ENCODE measurements at regions of chr19 and their contacts with region 1.

Region 1: GRCh38 chr19:35716801-35717666 is 769 bp upstream of the KMT2B start:
- DNase-seq: peak; percentile 92 to 99 (median 96)
- ATAC-seq: peak; percentile 82
- H3K4me3 ChIP-seq: peak overlapping the region; percentile 77 to 84
- H3K4me3 Mint-ChIP-seq: peak overlapping the region; percentile 96
- H3K27ac ChIP-seq: peak overlapping the region; percentile 44 to 83
- H3K27ac Mint-ChIP-seq: peak overlapping the region; percentile 97
- H3K4me1 ChIP-seq: peaks cover 59% of the 10 kb centered on the region
- H3K4me1 Mint-ChIP-seq: peaks cover 62% of the 10 kb centered on the region
- H3K27me3 ChIP-seq: no peaks in the 10 kb centered on the region
- H3K27me3 Mint-ChIP-seq: no peaks in the 10 kb centered on the region
- CTCF ChIP-seq: peak; percentile 99

Region 2: DNA sequence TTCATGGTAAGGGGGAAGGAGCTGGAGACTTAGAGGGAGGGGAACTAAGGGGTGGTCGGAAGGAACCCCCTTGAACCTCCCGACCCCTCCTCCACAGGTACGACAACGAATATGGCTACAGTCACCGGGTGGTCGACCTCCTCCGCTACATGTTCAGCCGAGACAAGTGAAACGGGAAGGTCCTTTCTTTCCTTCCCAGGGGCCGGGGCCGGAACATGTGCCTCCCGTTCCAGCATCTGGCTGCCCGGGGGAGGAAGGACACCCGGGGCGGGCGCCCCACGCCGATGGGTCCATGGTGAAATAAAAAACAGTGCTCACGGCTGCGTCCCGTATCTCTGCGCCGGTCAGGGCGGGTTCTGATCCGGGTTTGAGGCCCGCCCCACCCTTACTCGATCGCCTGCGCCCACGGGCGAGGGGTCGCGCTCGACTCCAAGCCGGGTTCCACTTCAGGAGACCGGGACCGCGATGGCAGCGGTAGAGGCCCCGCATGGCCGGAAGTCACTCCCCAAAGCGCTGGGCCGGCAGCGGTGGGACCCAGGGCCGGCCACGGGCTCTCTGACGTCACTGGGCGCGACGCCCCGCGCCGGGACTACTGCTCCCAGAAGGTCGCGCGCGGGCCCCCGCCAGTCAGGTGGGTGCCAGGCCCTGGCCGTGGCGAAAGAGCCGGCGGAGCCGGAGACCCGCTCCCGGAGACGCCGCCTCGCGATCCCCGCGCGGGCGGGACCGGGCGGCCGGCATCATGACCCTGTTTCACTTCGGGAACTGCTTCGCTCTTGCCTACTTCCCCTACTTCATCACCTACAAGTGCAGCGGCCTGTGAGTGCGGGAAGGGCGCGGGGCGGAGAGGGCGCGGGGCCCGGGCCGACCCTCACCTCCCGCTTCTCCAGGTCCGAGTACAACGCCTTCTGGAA is 171.8 kb before region 1 on chr19 and contains the start of gene TMEM147:
- CTCF ChIA-PET with region 1: interaction called, 3 read pairs
- POLR2A ChIA-PET with region 1: no interaction called
- intact Hi-C with region 1: loop called (anchors 1 kb)
- DNase-seq: peak; percentile 44 to 88 (median 79)
- ATAC-seq: peak; percentile 75
- H3K4me3 ChIP-seq: peak within 1 kb of the TSS; percentile 75 to 81
- H3K4me3 Mint-ChIP-seq: peak within 1 kb of the TSS; percentile 88
- H3K27ac ChIP-seq: peak within 1 kb of the TSS; percentile 79 to 85
- H3K27ac Mint-ChIP-seq: peak within 1 kb of the TSS; percentile 90
- H3K4me1 ChIP-seq: peaks cover 21% of the 10 kb centered on the region
- H3K4me1 Mint-ChIP-seq: peaks cover 35% of the 10 kb centered on the region
- H3K27me3 ChIP-seq: no peaks in the 10 kb centered on the region
- H3K27me3 Mint-ChIP-seq: no peaks in the 10 kb centered on the region
- CTCF ChIP-seq: no peak
- total RNA-seq, gene TMEM147: 22.3 to 27.2 TPM

Region 3: DNA sequence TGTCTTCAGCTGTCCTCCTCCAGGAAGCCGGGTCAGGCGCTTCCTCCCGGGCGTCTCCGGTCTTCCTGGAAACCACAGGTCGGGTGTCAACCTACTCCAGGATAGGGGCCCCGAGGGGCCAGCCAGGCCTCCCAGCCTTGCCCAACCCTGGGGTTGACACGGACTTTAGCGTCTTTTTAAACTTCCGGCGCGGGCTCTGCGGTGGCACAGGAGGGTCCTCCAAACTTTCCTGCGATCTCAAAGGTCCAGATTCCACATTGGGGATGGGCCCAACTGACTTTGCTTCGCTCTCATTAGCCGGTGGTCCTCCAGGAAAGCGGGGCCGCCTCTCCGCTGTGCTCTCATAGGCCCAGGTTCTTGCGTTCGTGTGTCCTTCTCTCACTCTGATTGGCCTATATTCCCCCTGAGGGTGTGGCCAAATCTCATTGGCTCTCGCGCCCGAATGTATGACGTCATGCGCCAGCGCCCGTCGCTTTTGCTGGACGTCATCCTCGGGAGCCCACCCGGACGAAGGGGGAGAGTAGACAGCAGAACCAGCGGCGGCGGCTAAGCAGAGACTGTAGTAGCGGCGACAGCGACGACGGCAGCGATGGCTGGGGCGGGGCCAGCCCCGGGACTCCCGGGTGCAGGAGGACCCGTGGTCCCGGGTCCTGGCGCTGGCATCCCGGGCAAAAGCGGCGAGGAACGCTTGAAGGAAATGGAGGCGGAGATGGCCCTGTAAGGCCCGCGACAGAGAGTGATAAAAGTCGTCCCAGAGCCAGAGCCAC is 88.3 kb before region 1 on chr19 and contains the start of gene RBM42:
- CTCF ChIA-PET with region 1: no interaction called
- POLR2A ChIA-PET with region 1: no interaction called
- intact Hi-C with region 1: loop called (anchors 1 kb)
- DNase-seq: peak; percentile 94 to 99 (median 98)
- ATAC-seq: peak; percentile 99
- H3K4me3 ChIP-seq: peak within 1 kb of the TSS; percentile 90 to 93
- H3K4me3 Mint-ChIP-seq: peak within 1 kb of the TSS; percentile 96
- H3K27ac ChIP-seq: peak within 1 kb of the TSS; percentile 90 to 91
- H3K27ac Mint-ChIP-seq: peak within 1 kb of the TSS; percentile 96
- H3K4me1 ChIP-seq: peaks cover 17% of the 10 kb centered on the region
- H3K4me1 Mint-ChIP-seq: peaks cover 24% of the 10 kb centered on the region
- H3K27me3 ChIP-seq: no peaks in the 10 kb centered on the region
- H3K27me3 Mint-ChIP-seq: no peaks in the 10 kb centered on the region
- CTCF ChIP-seq: no peak
- total RNA-seq, gene RBM42: 49.9 to 51.3 TPM

Region 4: DNA sequence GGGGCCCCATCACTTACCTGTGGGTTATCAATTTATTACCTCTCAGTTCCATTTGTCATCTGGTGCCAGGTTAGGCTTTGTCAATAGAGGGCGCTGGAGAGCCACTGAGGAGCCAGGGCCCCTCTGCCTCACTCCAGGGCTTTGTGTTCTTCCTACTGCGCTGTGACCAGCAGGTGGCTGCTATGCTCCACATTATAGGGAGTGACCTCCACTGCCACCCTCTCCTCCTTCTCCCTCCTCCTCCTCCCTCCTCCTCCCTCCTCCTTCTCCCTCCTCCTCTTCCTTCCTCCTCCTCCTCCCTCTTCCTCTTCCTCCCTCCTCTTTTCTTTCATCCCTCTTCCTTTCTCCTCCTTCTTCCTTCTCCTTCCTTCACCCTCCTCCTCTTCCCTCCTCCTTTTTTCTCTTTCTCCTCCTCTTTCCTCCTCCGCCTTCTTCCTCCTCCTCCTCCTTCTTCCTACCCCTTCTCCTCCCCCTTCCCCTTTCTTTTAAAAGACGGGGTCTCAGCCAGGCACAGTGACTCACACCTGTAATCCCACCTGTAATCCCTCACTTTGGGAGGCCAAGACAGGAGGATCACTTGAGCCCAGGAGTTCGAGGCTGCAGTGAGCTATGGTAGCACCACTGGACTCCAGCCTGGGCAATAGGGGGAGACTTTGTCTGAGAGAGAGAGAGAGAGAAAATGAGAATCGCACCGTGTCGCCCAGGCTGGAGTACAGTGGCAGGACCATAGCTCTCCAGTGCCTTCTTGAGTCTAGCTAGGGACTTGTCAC is 23.0 kb before region 1 on chr19:
- CTCF ChIA-PET with region 1: interaction called, 45 read pairs
- POLR2A ChIA-PET with region 1: no interaction called
- intact Hi-C with region 1: loop called (anchors 1 kb)
- DNase-seq: peak; percentile 80 to 94 (median 91)
- ATAC-seq: peak; percentile 100
- H3K4me3 ChIP-seq: no peak overlapping the region
- H3K4me3 Mint-ChIP-seq: no peak overlapping the region
- H3K27ac ChIP-seq: no peak overlapping the region
- H3K27ac Mint-ChIP-seq: no peak overlapping the region
- H3K4me1 ChIP-seq: no peaks in the 10 kb centered on the region
- H3K4me1 Mint-ChIP-seq: no peaks in the 10 kb centered on the region
- H3K27me3 ChIP-seq: no peaks in the 10 kb centered on the region
- H3K27me3 Mint-ChIP-seq: no peaks in the 10 kb centered on the region
- CTCF ChIP-seq: peak; percentile 99

Region 5: DNA sequence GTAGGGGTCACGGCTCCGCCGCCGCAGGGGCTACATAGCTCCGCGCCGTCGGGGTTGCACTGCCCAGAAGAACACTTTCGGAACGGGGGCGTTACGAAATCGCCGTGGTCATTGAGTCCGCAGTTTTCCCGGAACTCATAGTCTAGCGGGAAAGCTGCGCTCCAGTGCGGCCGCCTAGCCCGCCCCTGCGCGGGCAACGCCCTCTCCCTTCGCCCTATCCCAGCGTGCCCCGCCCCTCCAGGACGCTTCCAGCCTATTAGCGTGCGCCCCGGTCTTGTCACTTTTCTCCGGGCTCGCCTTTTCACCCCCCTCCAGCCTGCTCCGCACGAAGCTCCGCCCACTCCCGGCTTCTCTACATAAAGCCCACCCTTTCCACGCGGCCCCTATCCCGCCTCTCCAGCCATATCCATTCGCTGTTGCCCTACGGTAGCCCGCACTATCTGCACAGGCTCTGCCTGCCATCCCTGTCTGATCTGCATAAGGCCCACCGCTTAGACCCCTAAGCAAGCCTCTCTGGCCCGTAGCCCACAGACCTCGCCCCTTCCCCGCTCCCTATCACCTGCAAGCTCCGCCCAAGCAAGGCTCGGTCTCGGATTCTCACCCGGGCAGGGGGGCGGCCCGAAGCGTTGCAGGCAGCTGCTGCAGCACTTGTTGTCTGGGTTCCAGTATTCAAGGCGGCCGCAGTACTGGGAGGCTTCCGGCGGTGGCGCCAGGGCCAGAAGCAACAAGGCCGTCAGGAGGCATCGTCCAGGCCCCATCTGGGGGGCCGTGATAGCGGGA is 23.6 kb after region 1 on chr19:
- CTCF ChIA-PET with region 1: interaction called, 4 read pairs
- POLR2A ChIA-PET with region 1: interaction called, 17 read pairs
- intact Hi-C with region 1: loop called (anchors 1 kb)
- DNase-seq: peak; percentile 87 to 97 (median 95)
- ATAC-seq: peak; percentile 65
- H3K4me3 ChIP-seq: peak overlapping the region; percentile 60 to 63
- H3K4me3 Mint-ChIP-seq: peak overlapping the region; percentile 87
- H3K27ac ChIP-seq: peak overlapping the region; percentile 50 to 58
- H3K27ac Mint-ChIP-seq: peak overlapping the region; percentile 83
- H3K4me1 ChIP-seq: peaks cover 51% of the 10 kb centered on the region
- H3K4me1 Mint-ChIP-seq: peaks cover 53% of the 10 kb centered on the region
- H3K27me3 ChIP-seq: no peaks in the 10 kb centered on the region
- H3K27me3 Mint-ChIP-seq: no peaks in the 10 kb centered on the region
- CTCF ChIP-seq: no peak

Region 6: GRCh38 chr19:35757749-35758608 is 40.9 kb after region 1 on chr19 and contains the start of gene PROSER3:
- CTCF ChIA-PET with region 1: no interaction called
- POLR2A ChIA-PET with region 1: no interaction called
- intact Hi-C with region 1: loop called (anchors 1 kb)
- DNase-seq: peak; percentile 96 to 99 (median 98)
- ATAC-seq: peak; percentile 95
- H3K4me3 ChIP-seq: peak within 1 kb of the TSS; percentile 98 to 100
- H3K4me3 Mint-ChIP-seq: peak within 1 kb of the TSS; percentile 96
- H3K27ac ChIP-seq: peak within 1 kb of the TSS; percentile 95 to 97
- H3K27ac Mint-ChIP-seq: peak within 1 kb of the TSS; percentile 97
- H3K4me1 ChIP-seq: peaks cover 25% of the 10 kb centered on the region
- H3K4me1 Mint-ChIP-seq: peaks cover 34% of the 10 kb centered on the region
- H3K27me3 ChIP-seq: no peaks in the 10 kb centered on the region
- H3K27me3 Mint-ChIP-seq: peaks cover 9% of the 10 kb centered on the region
- CTCF ChIP-seq: no peak
- total RNA-seq, gene PROSER3: 17.3 to 19.5 TPM

Region 7: GRCh38 chr19:35899547-35900214 is 182.6 kb after region 1 on chr19:
- CTCF ChIA-PET with region 1: no interaction called
- POLR2A ChIA-PET with region 1: no interaction called
- intact Hi-C with region 1: loop called in 1 of 2 experiments (anchors 1 kb)
- DNase-seq: peak; percentile 68 to 97 (median 87)
- ATAC-seq: peak; percentile 59
- H3K4me3 ChIP-seq: peak overlapping the region; percentile 95 to 97
- H3K4me3 Mint-ChIP-seq: peak overlapping the region; percentile 100
- H3K27ac ChIP-seq: peak overlapping the region; percentile 85 to 99
- H3K27ac Mint-ChIP-seq: peak overlapping the region; percentile 95
- H3K4me1 ChIP-seq: peaks cover 45% of the 10 kb centered on the region
- H3K4me1 Mint-ChIP-seq: peaks cover 57% of the 10 kb centered on the region
- H3K27me3 ChIP-seq: no peaks in the 10 kb centered on the region
- H3K27me3 Mint-ChIP-seq: no peaks in the 10 kb centered on the region
- CTCF ChIP-seq: no peak

Measured in CD8-positive, alpha-beta T cell (primary cell).